CD8-positive, alpha-beta memory T cell (primary cell): ENCODE measurements at regions of chr10 and their contacts with region 1.

Region 1: GRCh38 chr10:17430647-17431355 is 23.6 kb downstream of the ST8SIA6 start:
- DNase-seq: peak; percentile 39 to 68 (median 54)
- H3K4me3 ChIP-seq: no peak overlapping the region
- H3K4me3 Mint-ChIP-seq: peak overlapping the region in 3 of 7 donors; percentile 4 to 39 (median 6)
- H3K27ac ChIP-seq: no peak overlapping the region
- H3K27ac Mint-ChIP-seq: peak overlapping the region in 2 of 8 donors; percentile 3 to 57
- H3K4me1 ChIP-seq: peaks cover 53% of the 10 kb centered on the region
- H3K4me1 Mint-ChIP-seq: peaks cover 51 to 53% (median 51%) of the 10 kb centered on the region in 3 donors
- H3K27me3 ChIP-seq: no peaks in the 10 kb centered on the region
- H3K27me3 Mint-ChIP-seq: peaks cover 6 to 13% of the 10 kb centered on the region in 2 donors

Region 2: DNA sequence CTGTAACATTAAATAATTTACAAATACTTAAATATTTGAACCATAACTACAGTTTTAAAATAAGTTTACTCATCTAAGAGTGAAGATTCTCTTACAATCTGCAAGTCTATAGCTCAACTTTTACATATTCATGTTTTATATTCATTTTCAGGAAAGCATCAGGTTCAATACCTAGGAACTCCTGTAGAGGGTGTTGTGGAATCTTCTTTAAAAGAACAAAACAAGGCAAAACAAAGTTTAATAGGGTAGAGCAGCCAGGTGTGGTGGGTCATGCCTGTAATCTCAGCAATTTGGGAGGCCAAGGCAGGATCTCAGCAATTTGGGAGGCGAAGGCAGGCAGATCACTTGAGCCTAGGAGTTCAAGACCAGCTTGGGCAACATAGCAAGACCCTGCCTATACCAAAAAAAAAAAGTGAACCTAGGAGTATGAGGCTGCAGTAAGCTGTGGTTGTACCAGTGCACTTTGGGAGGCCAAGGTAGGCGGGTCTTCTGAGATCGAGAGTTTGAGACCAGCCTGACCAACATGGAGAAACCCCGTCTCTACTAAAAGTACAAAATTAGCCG is 21.5 kb before region 1 on chr10:
- CTCF ChIA-PET with region 1: interaction called, 115 read pairs
- POLR2A ChIA-PET with region 1: interaction called, 6 read pairs
- DNase-seq: peak in 2 of 5 donors; percentile 28 to 41
- H3K4me3 ChIP-seq: no peak overlapping the region
- H3K4me3 Mint-ChIP-seq: no peak overlapping the region
- H3K27ac ChIP-seq: no peak overlapping the region
- H3K27ac Mint-ChIP-seq: peak overlapping the region in 2 of 8 donors; percentile 14 to 37
- H3K4me1 ChIP-seq: peaks cover 13% of the 10 kb centered on the region
- H3K4me1 Mint-ChIP-seq: peaks cover 6 to 15% (median 10%) of the 10 kb centered on the region in 3 donors
- H3K27me3 ChIP-seq: no peaks in the 10 kb centered on the region
- H3K27me3 Mint-ChIP-seq: no peaks in the 10 kb centered on the region

Region 3: GRCh38 chr10:17418249-17418648 is 12.6 kb before region 1 on chr10:
- CTCF ChIA-PET with region 1: interaction called, 115 read pairs
- POLR2A ChIA-PET with region 1: no interaction called
- DNase-seq: no peak
- H3K4me3 ChIP-seq: no peak overlapping the region
- H3K4me3 Mint-ChIP-seq: no peak overlapping the region
- H3K27ac ChIP-seq: no peak overlapping the region
- H3K27ac Mint-ChIP-seq: no peak overlapping the region
- H3K4me1 ChIP-seq: peaks cover 19% of the 10 kb centered on the region
- H3K4me1 Mint-ChIP-seq: peaks cover 3 to 5% (median 3%) of the 10 kb centered on the region in 3 donors
- H3K27me3 ChIP-seq: no peaks in the 10 kb centered on the region
- H3K27me3 Mint-ChIP-seq: peaks cover 4 to 7% of the 10 kb centered on the region in 2 donors

Region 4: DNA sequence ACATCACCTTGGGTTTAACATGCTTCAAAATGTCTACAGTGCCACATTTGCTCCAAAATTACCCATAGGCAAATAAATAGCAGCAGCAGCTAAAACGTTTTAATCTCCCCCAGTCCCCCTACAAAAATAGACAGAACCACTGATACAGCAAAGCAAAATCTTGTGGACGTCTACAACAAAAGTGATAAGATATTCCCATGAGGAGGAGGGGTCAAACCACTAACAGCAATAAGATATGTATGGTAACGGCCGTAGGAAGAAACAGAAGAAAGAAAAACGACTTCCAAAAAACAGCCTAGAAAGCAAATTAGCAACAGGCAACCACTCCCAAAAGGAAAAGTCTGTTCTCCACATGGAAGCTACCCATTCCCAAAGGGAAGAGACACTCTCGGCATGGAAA is 58.0 kb after region 1 on chr10:
- CTCF ChIA-PET with region 1: no interaction called
- POLR2A ChIA-PET with region 1: no interaction called
- DNase-seq: no peak
- H3K4me3 ChIP-seq: no peak overlapping the region
- H3K4me3 Mint-ChIP-seq: no peak overlapping the region
- H3K27ac ChIP-seq: no peak overlapping the region
- H3K27ac Mint-ChIP-seq: no peak overlapping the region
- H3K4me1 ChIP-seq: no peaks in the 10 kb centered on the region
- H3K4me1 Mint-ChIP-seq: no peaks in the 10 kb centered on the region
- H3K27me3 ChIP-seq: no peaks in the 10 kb centered on the region
- H3K27me3 Mint-ChIP-seq: peaks cover 4 to 12% of the 10 kb centered on the region in 2 donors

Region 5: GRCh38 chr10:17527516-17528146 is 96.8 kb after region 1 on chr10:
- CTCF ChIA-PET with region 1: no interaction called
- POLR2A ChIA-PET with region 1: no interaction called
- DNase-seq: no peak
- H3K4me3 ChIP-seq: no peak overlapping the region
- H3K4me3 Mint-ChIP-seq: no peak overlapping the region
- H3K27ac ChIP-seq: no peak overlapping the region
- H3K27ac Mint-ChIP-seq: no peak overlapping the region
- H3K4me1 ChIP-seq: no peaks in the 10 kb centered on the region
- H3K4me1 Mint-ChIP-seq: no peaks in the 10 kb centered on the region
- H3K27me3 ChIP-seq: no peaks in the 10 kb centered on the region
- H3K27me3 Mint-ChIP-seq: peaks cover 7 to 17% of the 10 kb centered on the region in 2 donors